GM12878 (cell line): ENCODE measurements at regions of chr6 and their contacts with region 1.

Region 1: DNA sequence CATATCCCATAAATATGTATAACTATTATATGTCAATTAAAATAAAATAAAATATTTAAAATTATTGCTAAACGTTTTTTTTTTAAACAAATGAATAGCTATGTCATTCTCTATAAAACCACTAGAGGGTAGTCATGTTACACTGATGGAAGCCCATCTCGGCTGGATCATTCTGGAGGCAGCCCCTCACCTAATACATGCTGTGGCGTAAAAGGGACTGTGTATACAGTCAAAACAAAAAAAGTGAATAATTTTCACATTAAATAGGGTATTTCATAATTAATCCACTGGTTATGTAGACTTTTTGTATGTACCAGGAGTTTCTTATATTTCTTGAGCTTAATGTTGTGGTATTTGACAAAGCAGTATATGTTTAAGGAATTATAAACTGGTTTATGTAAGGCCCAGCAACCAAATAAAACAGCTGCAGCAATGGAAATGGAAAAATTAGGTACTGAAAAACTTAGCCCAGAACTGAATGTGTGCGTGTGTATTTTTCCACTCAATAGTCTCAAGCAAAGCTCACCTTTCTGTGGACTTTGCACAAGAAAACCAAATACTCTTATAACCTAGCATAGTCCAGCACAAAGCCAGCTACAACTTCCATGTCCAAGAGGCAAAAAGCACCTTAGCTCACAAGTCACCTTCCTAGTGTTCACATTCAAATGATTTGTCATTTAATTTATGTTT is 81.7 kb downstream of the COL9A1 start:
- DNase-seq: no peak
- ATAC-seq: peak; percentile 76
- H3K4me3 ChIP-seq: no peak overlapping the region
- H3K27ac ChIP-seq: no peak overlapping the region
- H3K4me1 ChIP-seq: no peaks in the 10 kb centered on the region
- H3K27me3 ChIP-seq: no peaks in the 10 kb centered on the region; a peak in 1 of 4 replicates
- CTCF ChIP-seq: peak; percentile 59 to 66 (median 61)
- EP300 ChIP-seq: no peak
- POLR2A ChIP-seq: no peak
- RAD21 ChIP-seq: peak; percentile 82

Region 2: GRCh38 chr6:70210462-70210861 is 10.7 kb before region 1 on chr6:
- CTCF ChIA-PET with region 1: interaction called, 30 read pairs
- POLR2A ChIA-PET with region 1: no interaction called
- RAD21 ChIA-PET with region 1: interaction called, 7 read pairs
- SMC1A ChIA-PET with region 1: interaction called, 12 read pairs
- in situ Hi-C with region 1: no loop called
- intact Hi-C with region 1: no loop called
- DNase-seq: no peak
- ATAC-seq: peak; percentile 62
- H3K4me3 ChIP-seq: no peak overlapping the region
- H3K27ac ChIP-seq: no peak overlapping the region
- H3K4me1 ChIP-seq: no peaks in the 10 kb centered on the region
- H3K27me3 ChIP-seq: no peaks in the 10 kb centered on the region
- CTCF ChIP-seq: peak; percentile 8 to 37 (median 30); a peak in 4 of 6 replicates
- EP300 ChIP-seq: no peak
- POLR2A ChIP-seq: no peak
- RAD21 ChIP-seq: 0 out of 2 replicates have a peak, but pooled peaks have one; percentile 9

Region 3: GRCh38 chr6:70236343-70236742 is 15.2 kb after region 1 on chr6:
- CTCF ChIA-PET with region 1: interaction called, 74 read pairs
- POLR2A ChIA-PET with region 1: no interaction called
- RAD21 ChIA-PET with region 1: interaction called, 26 read pairs
- SMC1A ChIA-PET with region 1: interaction called, 24 read pairs
- in situ Hi-C with region 1: no loop called
- intact Hi-C with region 1: no loop called
- DNase-seq: no peak
- ATAC-seq: no peak
- H3K4me3 ChIP-seq: no peak overlapping the region
- H3K27ac ChIP-seq: no peak overlapping the region
- H3K4me1 ChIP-seq: no peaks in the 10 kb centered on the region
- H3K27me3 ChIP-seq: 0 out of 4 replicates have a peak, but pooled peaks cover 0 to 2% of the 10 kb centered on the region in 2 experiments
- CTCF ChIP-seq: no peak
- EP300 ChIP-seq: no peak
- POLR2A ChIP-seq: no peak
- RAD21 ChIP-seq: no peak

Region 4: DNA sequence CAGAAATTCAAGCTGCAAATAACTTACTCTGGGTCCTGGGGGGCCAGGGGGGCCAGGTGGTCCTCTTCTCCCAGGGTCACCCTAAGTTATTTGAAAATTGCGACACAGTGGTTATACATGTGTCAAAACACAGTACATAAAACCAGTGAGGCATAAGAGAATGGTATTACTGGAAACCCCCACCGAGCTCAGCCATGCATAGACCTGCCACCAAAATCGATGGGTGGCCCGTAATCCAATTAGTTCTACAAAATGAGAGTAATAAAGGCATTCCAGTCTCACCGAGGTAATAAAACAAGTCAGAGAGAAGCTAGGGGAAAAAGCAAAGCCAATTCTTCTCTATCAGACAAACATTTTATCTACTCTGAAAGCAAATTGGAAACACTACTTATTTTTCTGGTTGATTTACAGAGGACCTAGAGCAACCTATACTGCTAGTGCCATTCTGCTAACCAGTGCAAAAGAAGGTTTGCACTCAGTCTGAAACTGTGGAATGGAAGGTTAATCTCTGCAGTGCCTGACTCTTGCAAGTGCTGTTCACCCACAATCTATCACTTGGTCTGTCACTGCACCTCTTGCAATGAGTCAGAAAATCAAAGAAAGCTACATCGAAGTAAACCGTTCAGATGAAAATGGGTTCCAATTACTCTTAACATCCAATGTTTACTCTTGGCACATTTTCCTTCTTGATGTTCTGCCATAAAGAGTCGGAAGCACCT is 49.3 kb after region 1 on chr6:
- CTCF ChIA-PET with region 1: interaction called, 11 read pairs
- POLR2A ChIA-PET with region 1: no interaction called
- RAD21 ChIA-PET with region 1: interaction called, 3 read pairs
- SMC1A ChIA-PET with region 1: interaction called, 3 read pairs
- in situ Hi-C with region 1: no loop called
- intact Hi-C with region 1: no loop called
- DNase-seq: peak; percentile 11
- ATAC-seq: peak; percentile 97
- H3K4me3 ChIP-seq: no peak overlapping the region
- H3K27ac ChIP-seq: no peak overlapping the region
- H3K4me1 ChIP-seq: no peaks in the 10 kb centered on the region; the same call in 1 of the 2 replicates
- H3K27me3 ChIP-seq: no peaks in the 10 kb centered on the region
- CTCF ChIP-seq: no peak
- EP300 ChIP-seq: no peak
- POLR2A ChIP-seq: no peak
- RAD21 ChIP-seq: no peak

Region 5: GRCh38 chr6:70304616-70305015 is 83.4 kb after region 1 on chr6:
- CTCF ChIA-PET with region 1: interaction called, 53 read pairs
- POLR2A ChIA-PET with region 1: no interaction called
- RAD21 ChIA-PET with region 1: interaction called, 9 read pairs
- SMC1A ChIA-PET with region 1: interaction called, 12 read pairs
- in situ Hi-C with region 1: no loop called
- intact Hi-C with region 1: no loop called
- DNase-seq: no peak
- ATAC-seq: no peak
- H3K4me3 ChIP-seq: no peak overlapping the region
- H3K27ac ChIP-seq: no peak overlapping the region
- H3K4me1 ChIP-seq: no peaks in the 10 kb centered on the region
- H3K27me3 ChIP-seq: no peaks in the 10 kb centered on the region
- CTCF ChIP-seq: no peak
- EP300 ChIP-seq: no peak
- POLR2A ChIP-seq: no peak
- RAD21 ChIP-seq: no peak

Region 6: DNA sequence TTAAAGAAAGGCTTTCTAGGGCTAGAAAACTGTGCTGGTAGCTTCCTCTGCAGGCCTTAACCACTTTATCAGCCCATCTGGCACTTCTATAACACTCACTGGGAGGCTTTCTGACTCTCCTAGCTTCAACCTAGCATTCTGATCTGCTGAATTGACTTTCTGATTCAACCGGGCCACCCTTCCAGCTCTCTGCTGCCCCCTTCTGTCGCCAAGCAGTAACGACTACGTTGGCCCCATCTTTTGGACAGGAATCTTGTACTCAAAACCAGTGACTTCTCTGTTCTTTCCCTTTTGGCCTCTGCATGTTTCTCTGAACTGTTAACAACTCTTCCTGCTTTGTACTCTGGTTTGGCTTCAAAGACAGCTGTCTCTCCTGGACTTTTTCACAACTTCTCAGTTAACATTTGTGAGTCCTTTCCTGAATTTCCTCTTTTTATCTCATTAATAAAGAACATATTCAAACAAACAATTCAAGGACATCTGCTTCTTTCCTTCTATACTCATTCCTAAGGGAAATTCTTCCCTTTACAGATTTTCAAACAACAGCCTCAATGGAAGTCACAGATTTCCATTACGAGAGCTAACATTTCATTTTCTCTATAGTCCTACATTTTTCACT is 148.3 kb after region 1 on chr6:
- CTCF ChIA-PET with region 1: interaction called, 115 read pairs
- POLR2A ChIA-PET with region 1: no interaction called
- RAD21 ChIA-PET with region 1: interaction called, 64 read pairs
- SMC1A ChIA-PET with region 1: interaction called, 41 read pairs
- in situ Hi-C with region 1: loop called (anchors 5 kb)
- intact Hi-C with region 1: loop called (anchors 1 kb)
- DNase-seq: peak; percentile 21
- ATAC-seq: peak; percentile 96
- H3K4me3 ChIP-seq: no peak overlapping the region
- H3K27ac ChIP-seq: no peak overlapping the region
- H3K4me1 ChIP-seq: no peaks in the 10 kb centered on the region
- H3K27me3 ChIP-seq: no peaks in the 10 kb centered on the region; a peak in 3 of 4 replicates
- CTCF ChIP-seq: peak; percentile 90 to 93 (median 90)
- EP300 ChIP-seq: no peak
- POLR2A ChIP-seq: no peak
- RAD21 ChIP-seq: peak; percentile 86

Region 7: DNA sequence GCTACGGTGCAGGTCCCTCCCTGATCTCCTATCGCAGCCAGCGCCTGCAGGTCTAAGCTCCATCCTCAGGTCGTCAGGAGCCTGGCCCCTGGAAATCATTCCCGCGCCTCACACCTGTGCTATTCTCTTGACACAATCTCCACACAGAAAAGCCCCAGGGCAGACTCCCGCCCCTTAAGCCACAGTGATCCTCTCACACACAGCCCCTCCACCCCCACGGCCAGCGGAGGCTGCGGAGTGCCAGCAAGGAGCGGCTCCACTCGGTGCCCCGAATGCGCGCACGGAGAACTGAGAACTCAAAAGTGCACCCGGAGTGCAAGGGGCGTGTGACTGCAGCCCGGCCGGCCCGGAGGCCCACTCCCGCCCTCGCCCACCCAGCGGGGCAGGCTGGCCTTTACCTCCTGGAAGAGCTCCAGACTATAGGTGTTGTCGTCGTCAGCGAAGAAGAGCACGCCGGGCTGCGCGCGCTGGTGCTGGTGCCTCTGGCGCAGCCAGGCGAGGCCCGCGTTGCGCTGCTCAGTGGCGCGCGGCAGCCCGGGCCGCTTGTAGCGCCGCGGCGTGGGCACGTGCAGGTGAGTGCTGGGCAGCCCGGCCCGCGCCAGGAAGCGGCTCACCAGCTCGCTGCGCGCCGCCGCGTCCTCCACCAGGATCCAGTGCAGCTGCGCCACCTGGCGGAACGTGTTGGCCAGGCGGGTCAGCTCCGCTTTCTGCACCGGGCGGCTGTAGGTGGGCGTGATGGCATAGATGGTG is 734.4 kb after region 1 on chr6:
- CTCF ChIA-PET with region 1: interaction called, 11 read pairs
- POLR2A ChIA-PET with region 1: no interaction called
- RAD21 ChIA-PET with region 1: interaction called, 8 read pairs
- SMC1A ChIA-PET with region 1: no interaction called
- in situ Hi-C with region 1: no loop called
- intact Hi-C with region 1: no loop called
- DNase-seq: peak; percentile 11
- ATAC-seq: peak; percentile 99
- H3K4me3 ChIP-seq: peak overlapping the region; percentile 74; the same call in 1 of the 2 replicates
- H3K27ac ChIP-seq: no peak overlapping the region
- H3K4me1 ChIP-seq: peaks cover 3% of the 10 kb centered on the region; the same call in 1 of the 2 replicates
- H3K27me3 ChIP-seq: peaks cover 9 to 13% of the 10 kb centered on the region in 2 experiments
- CTCF ChIP-seq: peak; percentile 86 to 89 (median 86)
- EP300 ChIP-seq: no peak
- POLR2A ChIP-seq: no peak
- RAD21 ChIP-seq: peak; percentile 67